Calu3 (cell line): ENCODE measurements at regions of chr15 and their contacts with region 1.

Region 1: GRCh38 chr15:88246666-88247446 is 9.7 kb downstream of the NTRK3 start:
- DNase-seq: peak; percentile 85
- H3K4me3 Mint-ChIP-seq: no peak overlapping the region
- H3K27ac Mint-ChIP-seq: no peak overlapping the region
- H3K4me1 Mint-ChIP-seq: no peaks in the 10 kb centered on the region
- H3K27me3 Mint-ChIP-seq: peaks cover 54% of the 10 kb centered on the region
- CTCF ChIP-seq: peak; percentile 90

Region 2: GRCh38 chr15:86624261-86625036 is 1622.4 kb before region 1 on chr15:
- CTCF ChIA-PET with region 1: no interaction called
- intact Hi-C with region 1: loop called (anchors 2 kb)
- DNase-seq: peak; percentile 78
- H3K4me3 Mint-ChIP-seq: no peak overlapping the region
- H3K27ac Mint-ChIP-seq: no peak overlapping the region
- H3K4me1 Mint-ChIP-seq: no peaks in the 10 kb centered on the region
- H3K27me3 Mint-ChIP-seq: no peaks in the 10 kb centered on the region
- CTCF ChIP-seq: peak; percentile 42

Region 3: DNA sequence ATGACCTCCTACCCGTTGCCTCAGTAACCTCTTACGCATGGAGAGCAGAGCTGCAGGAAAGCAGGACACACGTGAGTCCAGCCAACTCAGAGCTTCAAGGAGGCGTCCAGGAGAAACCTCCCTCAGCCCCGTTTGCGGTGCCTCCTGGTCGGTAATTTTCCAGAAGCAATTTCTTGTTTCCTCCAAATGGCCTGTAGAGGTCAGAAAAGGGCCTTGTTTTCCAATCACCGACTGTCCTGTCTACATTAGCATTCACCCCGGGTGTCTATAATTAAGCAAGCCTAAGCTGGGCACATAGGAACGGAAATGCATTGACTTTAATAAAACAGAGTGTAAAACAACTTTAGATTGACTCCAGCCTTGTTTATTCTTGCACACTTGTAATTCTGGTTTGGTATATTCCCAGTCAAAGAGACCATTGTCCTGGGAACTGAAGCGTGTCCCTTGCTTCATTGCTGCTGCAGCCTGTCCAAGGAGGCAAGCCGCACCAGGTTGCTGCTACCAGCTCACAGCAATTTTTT is 1331.0 kb before region 1 on chr15:
- CTCF ChIA-PET with region 1: no interaction called
- intact Hi-C with region 1: loop called (anchors 5 kb)
- DNase-seq: peak; percentile 7
- H3K4me3 Mint-ChIP-seq: no peak overlapping the region
- H3K27ac Mint-ChIP-seq: no peak overlapping the region
- H3K4me1 Mint-ChIP-seq: no peaks in the 10 kb centered on the region
- H3K27me3 Mint-ChIP-seq: no peaks in the 10 kb centered on the region
- CTCF ChIP-seq: no peak

Region 4: DNA sequence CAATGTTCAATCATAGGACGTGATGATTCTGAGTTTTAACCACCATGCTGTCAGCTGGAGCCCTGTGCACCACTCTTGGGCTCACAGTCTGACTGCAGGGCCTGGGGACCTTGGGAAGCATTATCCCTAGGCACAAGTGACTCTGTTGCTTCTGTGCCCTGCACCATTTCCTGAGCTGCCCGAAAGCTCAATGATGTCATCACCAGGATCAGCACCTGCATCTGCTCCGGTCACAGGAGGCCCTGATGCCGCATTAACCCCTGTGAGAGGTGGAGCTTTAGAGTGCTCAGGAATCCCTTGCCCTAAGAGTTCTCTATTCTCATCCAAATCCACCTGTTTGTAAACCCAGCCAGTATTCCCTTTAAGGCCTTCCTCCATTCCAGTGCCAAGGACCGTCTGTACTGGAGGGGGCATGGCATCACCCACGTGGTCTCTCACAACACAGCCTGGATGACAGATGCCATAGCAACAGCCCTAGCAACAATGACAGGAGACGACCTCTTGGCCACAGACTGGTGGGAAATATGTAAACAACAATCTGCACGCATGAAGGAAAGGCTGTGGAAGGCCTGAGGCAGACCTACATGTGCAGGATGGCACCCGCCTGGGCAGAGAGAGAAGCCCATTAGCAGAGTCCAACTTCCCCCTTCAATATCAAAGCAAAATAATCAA is 28.2 kb before region 1 on chr15:
- CTCF ChIA-PET with region 1: no interaction called
- intact Hi-C with region 1: no loop called
- DNase-seq: no peak
- H3K4me3 Mint-ChIP-seq: no peak overlapping the region
- H3K27ac Mint-ChIP-seq: no peak overlapping the region
- H3K4me1 Mint-ChIP-seq: no peaks in the 10 kb centered on the region
- H3K27me3 Mint-ChIP-seq: peaks cover 48% of the 10 kb centered on the region
- CTCF ChIP-seq: no peak

Region 5: GRCh38 chr15:88331280-88331679 is 84.4 kb after region 1 on chr15:
- CTCF ChIA-PET with region 1: no interaction called
- intact Hi-C with region 1: no loop called
- DNase-seq: peak; percentile 67
- H3K4me3 Mint-ChIP-seq: no peak overlapping the region
- H3K27ac Mint-ChIP-seq: no peak overlapping the region
- H3K4me1 Mint-ChIP-seq: no peaks in the 10 kb centered on the region
- H3K27me3 Mint-ChIP-seq: peaks cover 88% of the 10 kb centered on the region
- CTCF ChIP-seq: peak; percentile 50

Region 6: GRCh38 chr15:88365124-88365523 is 118.3 kb after region 1 on chr15:
- CTCF ChIA-PET with region 1: no interaction called
- intact Hi-C with region 1: no loop called
- DNase-seq: no peak
- H3K4me3 Mint-ChIP-seq: no peak overlapping the region
- H3K27ac Mint-ChIP-seq: no peak overlapping the region
- H3K4me1 Mint-ChIP-seq: no peaks in the 10 kb centered on the region
- H3K27me3 Mint-ChIP-seq: peaks cover 24% of the 10 kb centered on the region
- CTCF ChIP-seq: no peak

Region 7: GRCh38 chr15:88454867-88455810 is 208.3 kb after region 1 on chr15:
- CTCF ChIA-PET with region 1: no interaction called
- intact Hi-C with region 1: loop called (anchors 5 kb)
- DNase-seq: peak; percentile 68
- H3K4me3 Mint-ChIP-seq: no peak overlapping the region
- H3K27ac Mint-ChIP-seq: no peak overlapping the region
- H3K4me1 Mint-ChIP-seq: no peaks in the 10 kb centered on the region
- H3K27me3 Mint-ChIP-seq: peaks cover 18% of the 10 kb centered on the region
- CTCF ChIP-seq: peak; percentile 66